Endothelial cell of umbilical vein (primary cell): ENCODE measurements at regions of chr11 and their contacts with region 1.

Region 1: GRCh38 chr11:102760355-102761035 is 19.9 kb downstream of the MMP10 start:
- DNase-seq: peak; percentile 96
- H3K4me3 ChIP-seq: no peak overlapping the region
- H3K27ac ChIP-seq: peak overlapping the region; percentile 88
- H3K4me1 ChIP-seq: peaks cover 50% of the 10 kb centered on the region
- H3K27me3 ChIP-seq: peaks cover 0 to 3% of the 10 kb centered on the region in 2 experiments
- CTCF ChIP-seq: no peak
- POLR2A ChIP-seq: peak; percentile 41

Region 2: DNA sequence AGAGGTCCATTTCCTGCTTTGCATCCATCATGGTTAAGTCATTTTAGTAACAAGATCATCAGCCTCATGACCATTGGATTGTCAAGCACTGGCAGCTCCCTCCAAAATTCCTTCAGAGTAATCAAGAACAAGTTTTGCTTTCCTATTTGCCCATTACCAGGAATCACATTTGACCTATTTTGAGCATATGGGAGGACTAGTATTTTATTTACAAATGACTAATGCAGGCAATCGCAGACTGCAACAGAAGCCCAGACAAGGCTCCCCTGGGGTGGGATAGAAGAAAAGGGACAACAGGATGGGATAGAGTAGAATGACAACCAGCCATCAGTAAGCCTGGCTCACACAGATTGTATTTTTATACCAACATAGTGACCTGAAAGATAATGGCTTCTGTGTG is 10.9 kb after region 1 on chr11:
- CTCF ChIA-PET with region 1: interaction called, 3 read pairs
- POLR2A ChIA-PET with region 1: no interaction called
- dilution Hi-C with region 1: no loop called
- intact Hi-C with region 1: loop called (anchors 1 kb)
- DNase-seq: no peak
- H3K4me3 ChIP-seq: no peak overlapping the region
- H3K27ac ChIP-seq: no peak overlapping the region
- H3K4me1 ChIP-seq: peaks cover 12% of the 10 kb centered on the region
- H3K27me3 ChIP-seq: no peaks in the 10 kb centered on the region
- CTCF ChIP-seq: no peak
- POLR2A ChIP-seq: no peak

Region 3: DNA sequence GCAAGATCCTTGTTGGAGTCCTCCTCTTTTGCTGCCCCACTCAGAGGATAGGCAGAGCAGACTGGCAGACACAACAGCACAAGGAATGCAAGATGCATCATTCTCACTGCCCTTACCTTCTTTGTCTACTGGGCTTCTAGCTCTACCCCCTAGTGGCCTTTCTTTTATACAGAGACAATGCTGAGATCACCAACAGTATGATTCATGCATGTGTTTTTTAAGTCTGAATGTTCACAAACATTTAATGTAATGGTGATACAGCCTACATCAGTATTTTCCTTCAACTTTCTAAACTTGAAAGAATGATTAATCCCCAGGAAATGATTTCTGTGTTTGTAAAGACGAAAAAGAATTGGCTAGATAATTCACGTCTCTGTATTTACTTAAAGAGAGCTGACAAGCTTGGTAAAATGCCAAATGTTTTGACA is 20.0 kb after region 1 on chr11 and contains the start of gene MMP10:
- CTCF ChIA-PET with region 1: interaction called, 25 read pairs
- POLR2A ChIA-PET with region 1: no interaction called
- dilution Hi-C with region 1: no loop called
- intact Hi-C with region 1: loop called (anchors 1 kb)
- DNase-seq: peak; percentile 89
- H3K4me3 ChIP-seq: peak within 1 kb of the TSS in 1 of 3 experiments; percentile 15
- H3K27ac ChIP-seq: peak within 1 kb of the TSS; percentile 76
- H3K4me1 ChIP-seq: peaks cover 14% of the 10 kb centered on the region
- H3K27me3 ChIP-seq: no peaks in the 10 kb centered on the region
- CTCF ChIP-seq: peak; percentile 61 to 63
- POLR2A ChIP-seq: no peak
- total RNA-seq, gene MMP10: 15.0 and 22.8 TPM in 2 replicates

Region 4: GRCh38 chr11:102802341-102802740 is 41.8 kb after region 1 on chr11:
- CTCF ChIA-PET with region 1: interaction called, 3 read pairs
- POLR2A ChIA-PET with region 1: no interaction called
- dilution Hi-C with region 1: no loop called
- intact Hi-C with region 1: loop called (anchors 1 kb)
- DNase-seq: peak; percentile 30
- H3K4me3 ChIP-seq: no peak overlapping the region
- H3K27ac ChIP-seq: peak overlapping the region; percentile 39
- H3K4me1 ChIP-seq: peaks cover 29% of the 10 kb centered on the region
- H3K27me3 ChIP-seq: peaks cover 3 to 10% of the 10 kb centered on the region in 2 experiments
- CTCF ChIP-seq: no peak
- POLR2A ChIP-seq: no peak

Region 5: GRCh38 chr11:102994105-102994504 is 233.6 kb after region 1 on chr11:
- CTCF ChIA-PET with region 1: no interaction called
- POLR2A ChIA-PET with region 1: no interaction called
- dilution Hi-C with region 1: no loop called
- intact Hi-C with region 1: loop called (anchors 1 kb)
- DNase-seq: no peak
- H3K4me3 ChIP-seq: no peak overlapping the region
- H3K27ac ChIP-seq: no peak overlapping the region
- H3K4me1 ChIP-seq: peaks cover 37% of the 10 kb centered on the region
- H3K27me3 ChIP-seq: no peaks in the 10 kb centered on the region
- CTCF ChIP-seq: no peak
- POLR2A ChIP-seq: no peak